Breast epithelium (tissue), 4 donors: ENCODE measurements at regions of chr2 and their contacts with region 1.

Region 1: GRCh38 chr2:239006622-239007300 is 158.9 kb downstream of the TWIST2 start:
- DNase-seq: peak in 1 of 2 donors; percentile 0
- H3K4me3 ChIP-seq: no peak overlapping the region
- H3K27ac ChIP-seq: no peak overlapping the region
- H3K4me1 ChIP-seq: peaks cover 0 to 4% of the 10 kb centered on the region in 2 donors
- H3K27me3 ChIP-seq: no peaks in the 10 kb centered on the region
- CTCF ChIP-seq: no peak
- POLR2A ChIP-seq: no peak

Region 2: DNA sequence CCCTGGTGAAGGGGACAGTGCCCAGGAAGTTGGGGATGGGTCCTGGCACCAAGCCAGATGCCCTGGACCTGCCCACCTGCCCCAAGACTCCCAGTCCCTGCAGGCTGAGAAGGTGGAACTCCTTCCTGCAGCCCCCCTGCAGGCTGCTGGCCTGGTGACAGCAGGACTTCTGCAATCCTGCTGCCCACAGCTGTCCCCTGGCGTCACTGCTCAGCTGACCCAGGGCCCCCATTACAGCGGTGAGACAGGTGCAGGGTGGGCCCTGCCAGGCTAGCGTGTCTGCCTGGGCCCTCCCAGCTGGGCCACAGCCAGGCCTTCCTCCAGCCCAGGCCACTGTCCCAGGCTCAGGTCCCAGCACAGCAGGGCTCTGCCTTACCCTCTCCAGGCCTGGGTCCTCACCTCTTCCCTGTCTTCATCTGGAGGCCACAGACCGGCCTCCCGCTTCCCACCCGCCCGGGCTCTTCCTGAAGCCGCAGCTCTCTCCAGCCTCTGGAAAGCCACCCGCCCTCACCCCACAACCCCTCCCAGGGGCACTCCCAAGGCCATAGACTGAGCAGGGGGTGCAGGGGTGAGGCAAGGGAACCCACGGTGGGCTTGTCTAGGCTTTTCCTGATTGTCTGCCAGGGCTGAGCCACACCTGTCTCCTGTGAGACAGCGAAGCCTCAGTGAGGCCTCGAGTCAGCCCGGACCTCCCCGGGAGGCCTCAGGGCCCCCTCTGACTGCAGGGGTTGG is 856.8 kb before region 1 on chr2:
- intact Hi-C with region 1: loop called (anchors 5 kb)
- DNase-seq: no peak
- H3K4me3 ChIP-seq: no peak overlapping the region
- H3K27ac ChIP-seq: no peak overlapping the region
- H3K4me1 ChIP-seq: no peaks in the 10 kb centered on the region
- H3K27me3 ChIP-seq: no peaks in the 10 kb centered on the region
- CTCF ChIP-seq: no peak
- POLR2A ChIP-seq: no peak

Region 3: GRCh38 chr2:238743243-238744065 is 263.3 kb before region 1 on chr2:
- intact Hi-C with region 1: no loop called
- DNase-seq: no peak
- H3K4me3 ChIP-seq: no peak overlapping the region
- H3K27ac ChIP-seq: no peak overlapping the region
- H3K4me1 ChIP-seq: no peaks in the 10 kb centered on the region
- H3K27me3 ChIP-seq: no peaks in the 10 kb centered on the region
- CTCF ChIP-seq: no peak
- POLR2A ChIP-seq: no peak

Region 4: DNA sequence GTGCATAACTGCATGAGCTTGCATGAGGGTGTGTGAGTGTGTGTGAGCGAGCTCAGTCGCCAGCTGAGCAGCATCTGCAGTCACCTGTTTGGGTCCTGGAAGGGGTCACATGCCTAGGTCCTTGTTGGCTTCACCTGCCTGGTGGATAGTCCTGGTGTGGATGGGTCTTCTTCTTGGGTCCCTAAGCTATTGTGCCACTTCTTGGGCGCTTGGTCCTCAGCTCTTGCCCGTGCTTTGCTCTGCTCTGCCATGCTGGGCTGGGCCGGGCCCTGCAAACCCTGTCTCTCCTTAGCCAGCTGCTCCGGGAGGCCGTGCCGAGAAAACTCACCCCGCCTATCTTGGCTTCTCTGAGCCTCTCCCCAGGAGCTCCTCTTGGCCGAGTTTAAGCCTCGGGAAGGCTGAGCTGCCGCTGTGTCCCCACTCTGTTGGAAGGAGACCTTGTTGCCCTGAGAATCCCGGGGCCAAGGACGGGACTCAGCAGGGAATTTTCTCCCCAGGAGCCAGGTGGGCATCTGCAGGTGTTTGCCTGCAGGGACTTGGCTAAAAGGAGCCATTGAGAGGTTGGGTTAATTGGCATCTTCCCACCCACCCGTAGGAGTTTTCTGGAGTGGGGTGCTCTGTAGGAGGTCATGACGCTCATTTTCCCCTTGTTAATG is 717.6 kb after region 1 on chr2:
- intact Hi-C with region 1: no loop called
- DNase-seq: peak in 1 of 2 donors; percentile 49
- H3K4me3 ChIP-seq: no peak overlapping the region
- H3K27ac ChIP-seq: no peak overlapping the region
- H3K4me1 ChIP-seq: no peaks in the 10 kb centered on the region
- H3K27me3 ChIP-seq: no peaks in the 10 kb centered on the region
- CTCF ChIP-seq: no peak
- POLR2A ChIP-seq: no peak